OCI-LY7 (cell line): ENCODE measurements at regions of chr18 and their contacts with region 1.

Region 1: DNA sequence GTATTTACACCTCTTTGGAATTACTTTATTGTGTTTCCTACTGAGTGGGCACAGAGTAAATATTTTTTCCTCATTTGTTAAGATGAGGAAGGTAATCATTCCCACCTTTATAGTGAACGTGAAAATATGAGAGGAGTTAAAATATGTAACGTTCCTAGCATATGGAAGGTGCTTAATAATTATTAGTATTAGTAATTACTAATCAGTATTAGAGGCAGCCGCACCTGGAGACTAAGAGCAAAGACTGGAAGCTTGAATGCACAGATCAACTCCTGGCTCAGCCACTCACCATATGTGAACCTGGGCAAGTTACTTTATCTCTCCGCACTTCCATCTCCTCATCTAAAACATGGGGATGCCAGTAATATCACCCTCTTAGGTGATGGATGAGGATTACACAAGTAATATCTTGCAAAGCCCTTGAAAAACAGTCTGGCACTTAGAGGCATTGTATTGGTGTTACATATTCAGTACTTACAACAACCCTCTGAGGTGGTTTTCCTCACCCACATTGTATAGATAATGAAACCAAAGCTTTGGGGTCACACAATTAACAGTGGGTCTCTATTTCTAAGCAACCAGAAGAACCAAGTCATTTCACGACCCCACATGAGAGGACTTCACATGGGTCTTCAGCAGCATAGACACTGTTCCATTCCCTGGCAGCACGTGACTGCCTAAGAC is 100.3 kb upstream of the KCTD1 start:
- DNase-seq: no peak
- H3K4me3 ChIP-seq: no peak overlapping the region
- H3K27ac ChIP-seq: no peak overlapping the region
- H3K4me1 ChIP-seq: peaks cover 8% of the 10 kb centered on the region
- CTCF ChIP-seq: no peak

Region 2: GRCh38 chr18:26307189-26307773 is 341.4 kb before region 1 on chr18:
- CTCF ChIA-PET with region 1: no interaction called
- POLR2A ChIA-PET with region 1: no interaction called
- intact Hi-C with region 1: loop called (anchors 2 kb)
- DNase-seq: peak; percentile 72
- H3K4me3 ChIP-seq: no peak overlapping the region
- H3K27ac ChIP-seq: no peak overlapping the region
- H3K4me1 ChIP-seq: peaks cover 4% of the 10 kb centered on the region
- CTCF ChIP-seq: peak; percentile 92

Region 3: DNA sequence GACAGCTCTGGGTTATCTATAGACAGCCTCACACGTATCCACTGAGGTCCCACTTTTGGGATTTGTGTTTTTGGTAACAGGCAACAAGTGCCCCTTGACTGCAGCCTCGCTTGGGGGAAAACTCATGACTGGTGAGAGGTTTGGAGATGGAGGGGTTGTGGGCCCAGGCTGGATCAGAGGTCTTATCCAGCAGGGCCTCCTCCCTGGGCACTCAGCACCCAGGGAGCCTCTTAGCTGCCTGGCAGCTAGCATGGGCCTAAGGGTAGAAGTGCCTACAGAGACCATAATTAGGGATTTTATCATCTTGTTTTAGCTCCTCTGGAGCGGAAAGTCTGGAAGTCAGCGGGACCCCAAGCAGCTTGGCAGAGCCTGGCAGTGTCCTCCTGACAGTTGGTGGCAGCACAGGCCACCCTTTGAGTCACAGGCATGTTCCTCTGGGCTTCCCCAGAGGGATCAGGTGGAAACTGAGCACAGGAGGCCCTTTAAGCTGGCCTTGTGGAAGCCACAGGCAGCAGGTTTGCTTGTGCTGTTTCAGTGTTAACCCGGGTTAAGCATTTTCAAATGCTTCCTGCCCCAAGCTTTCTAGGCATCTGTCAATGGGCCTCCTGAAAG is 243.4 kb before region 1 on chr18:
- CTCF ChIA-PET with region 1: interaction called, 4 read pairs
- POLR2A ChIA-PET with region 1: interaction called, 4 read pairs
- intact Hi-C with region 1: loop called (anchors 1 kb)
- DNase-seq: peak; percentile 61
- H3K4me3 ChIP-seq: no peak overlapping the region
- H3K27ac ChIP-seq: no peak overlapping the region
- H3K4me1 ChIP-seq: no peaks in the 10 kb centered on the region
- CTCF ChIP-seq: peak; percentile 69

Region 4: GRCh38 chr18:26468931-26469340 is 179.7 kb before region 1 on chr18:
- CTCF ChIA-PET with region 1: no interaction called
- POLR2A ChIA-PET with region 1: no interaction called
- intact Hi-C with region 1: loop called (anchors 5 kb)
- DNase-seq: peak; percentile 80
- H3K4me3 ChIP-seq: peak overlapping the region; percentile 41
- H3K27ac ChIP-seq: peak overlapping the region; percentile 65
- H3K4me1 ChIP-seq: peaks cover 34% of the 10 kb centered on the region
- CTCF ChIP-seq: peak; percentile 76

Region 5: GRCh38 chr18:26487437-26487836 is 161.2 kb before region 1 on chr18:
- CTCF ChIA-PET with region 1: no interaction called
- POLR2A ChIA-PET with region 1: interaction called, 3 read pairs
- intact Hi-C with region 1: loop called (anchors 5 kb)
- DNase-seq: no peak
- H3K4me3 ChIP-seq: no peak overlapping the region
- H3K27ac ChIP-seq: no peak overlapping the region
- H3K4me1 ChIP-seq: no peaks in the 10 kb centered on the region
- CTCF ChIP-seq: no peak

Region 6: GRCh38 chr18:26621161-26622026 is 27.3 kb before region 1 on chr18:
- CTCF ChIA-PET with region 1: no interaction called
- POLR2A ChIA-PET with region 1: no interaction called
- intact Hi-C with region 1: loop called (anchors 1 kb)
- DNase-seq: peak; percentile 60
- H3K4me3 ChIP-seq: peak overlapping the region; percentile 38
- H3K27ac ChIP-seq: no peak overlapping the region
- H3K4me1 ChIP-seq: no peaks in the 10 kb centered on the region
- CTCF ChIP-seq: peak; percentile 81